Thyroid gland (tissue), 4 donors: ENCODE measurements at regions of chr2 and their contacts with region 1.

Region 1: DNA sequence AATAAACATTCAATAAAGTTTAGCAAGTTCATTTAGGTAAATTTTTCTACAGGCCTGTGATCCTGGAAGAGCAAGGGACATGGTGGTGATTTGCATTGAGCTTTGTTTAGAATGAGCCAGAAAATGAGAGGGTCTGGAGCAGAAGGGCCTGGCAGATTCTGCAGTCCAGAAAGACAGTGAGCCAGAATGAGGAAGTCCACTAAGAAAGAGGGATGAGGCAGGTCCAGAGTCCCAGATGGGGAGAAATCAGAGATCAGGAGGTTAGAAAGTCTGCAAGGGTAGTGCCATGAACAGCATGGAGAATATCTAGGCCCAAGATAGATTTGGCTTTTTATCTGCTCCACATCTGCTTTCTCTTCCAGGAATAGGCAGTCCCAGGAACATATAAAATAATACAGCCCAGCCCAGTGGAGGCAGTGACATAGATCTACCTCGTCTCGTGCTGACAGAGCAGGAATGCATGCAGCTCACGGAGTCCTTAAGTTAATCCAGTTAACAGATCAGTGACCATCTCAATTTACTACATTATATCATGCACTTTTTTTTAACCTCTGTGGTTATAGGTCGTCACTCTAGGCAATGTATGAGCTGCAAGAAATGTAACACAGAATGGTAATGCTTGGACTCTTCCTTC is 429.1 kb downstream of the SUCLG1 start:
- DNase-seq: no peak
- H3K4me3 ChIP-seq: no peak overlapping the region
- H3K27ac ChIP-seq: no peak overlapping the region
- H3K4me1 ChIP-seq: no peaks in the 10 kb centered on the region
- H3K27me3 ChIP-seq: no peaks in the 10 kb centered on the region
- CTCF ChIP-seq: no peak
- POLR2A ChIP-seq: no peak

Region 2: GRCh38 chr2:82896117-82896516 is 1133.9 kb before region 1 on chr2:
- intact Hi-C with region 1: no loop called
- DNase-seq: no peak
- H3K4me3 ChIP-seq: no peak overlapping the region
- H3K27ac ChIP-seq: no peak overlapping the region
- H3K4me1 ChIP-seq: no peaks in the 10 kb centered on the region
- H3K27me3 ChIP-seq: no peaks in the 10 kb centered on the region
- CTCF ChIP-seq: no peak
- POLR2A ChIP-seq: no peak

Region 3: DNA sequence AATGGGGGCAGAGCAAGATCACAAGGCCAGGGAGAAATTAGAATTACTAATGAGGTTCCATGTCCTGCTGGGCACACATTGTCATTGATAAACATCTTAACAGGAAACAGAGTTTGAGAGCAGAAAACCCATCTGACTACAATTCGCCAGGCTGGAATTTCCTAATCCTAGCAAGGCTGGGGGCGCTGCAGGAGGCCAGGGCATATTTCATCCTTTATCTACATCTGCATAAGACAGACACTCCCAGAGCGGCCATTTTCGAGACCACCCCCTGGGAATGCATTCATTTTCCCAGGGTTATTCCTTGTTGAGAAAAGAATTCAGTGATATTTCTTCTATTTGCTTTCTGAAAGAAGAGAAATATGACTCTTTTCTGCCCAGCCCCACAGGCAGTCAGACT is 276.3 kb after region 1 on chr2:
- intact Hi-C with region 1: loop called (anchors 5 kb)
- DNase-seq: no peak
- H3K4me3 ChIP-seq: no peak overlapping the region
- H3K27ac ChIP-seq: no peak overlapping the region
- H3K4me1 ChIP-seq: no peaks in the 10 kb centered on the region
- H3K27me3 ChIP-seq: no peaks in the 10 kb centered on the region
- CTCF ChIP-seq: no peak
- POLR2A ChIP-seq: no peak